ENCODE measurements at regions of chr19 and their contacts with region 1.

Region 1: GRCh38 chr19:38229585-38230073 is 5.6 kb upstream of the DPF1 start:
- DNase-seq: peak in 2 of 4 donors; percentile 46 to 57
- ATAC-seq: peak; percentile 47
- H3K4me3 ChIP-seq: no peak overlapping the region
- H3K27ac ChIP-seq: no peak overlapping the region
- H3K4me1 ChIP-seq: peaks cover 10% of the 10 kb centered on the region
- H3K27me3 ChIP-seq: peaks cover 4 to 21% of the 10 kb centered on the region in 2 donors
- CTCF ChIP-seq: no peak
- POLR2A ChIP-seq: no peak

Region 2: GRCh38 chr19:37893845-37894575 is 335.6 kb before region 1 on chr19:
- intact Hi-C with region 1: loop called (anchors 10 kb)
- DNase-seq: no peak
- ATAC-seq: no peak
- H3K4me3 ChIP-seq: no peak overlapping the region
- H3K27ac ChIP-seq: no peak overlapping the region
- H3K4me1 ChIP-seq: no peaks in the 10 kb centered on the region
- H3K27me3 ChIP-seq: no peaks in the 10 kb centered on the region
- CTCF ChIP-seq: no peak
- POLR2A ChIP-seq: no peak

Region 3: GRCh38 chr19:38329651-38330050 is 100.0 kb after region 1 on chr19:
- intact Hi-C with region 1: loop called (anchors 5 kb)
- DNase-seq: no peak
- ATAC-seq: no peak
- H3K4me3 ChIP-seq: no peak overlapping the region
- H3K27ac ChIP-seq: no peak overlapping the region
- H3K4me1 ChIP-seq: no peaks in the 10 kb centered on the region
- H3K27me3 ChIP-seq: no peaks in the 10 kb centered on the region
- CTCF ChIP-seq: no peak
- POLR2A ChIP-seq: no peak